Dorsolateral prefrontal cortex (tissue), 120 donors: ENCODE measurements at regions of chr16 and their contacts with region 1.

Region 1: GRCh38 chr16:9012848-9013507 is 49.3 kb upstream of the USP7 start:
- DNase-seq: peak in 5 of 10 donors; percentile 46 to 73 (median 58)
- H3K4me3 ChIP-seq: no peak overlapping the region
- H3K27ac ChIP-seq: peak overlapping the region in 1 of 59 donors; percentile 15
- H3K27me3 ChIP-seq: peaks cover 0 to 34% (median 0%) of the 10 kb centered on the region in 45 donors
- CTCF ChIP-seq: peak in 8 of 56 donors; percentile 9 to 22 (median 16)

Region 2: GRCh38 chr16:8885674-8886592 is 127.0 kb before region 1 on chr16:
- intact Hi-C with region 1: loop called in 1 of 2 experiments (anchors 10 kb)
- DNase-seq: peak in 1 of 10 donors; percentile 43
- H3K4me3 ChIP-seq: no peak overlapping the region
- H3K27ac ChIP-seq: peak overlapping the region in 6 of 59 donors; percentile 7 to 22 (median 18)
- H3K27me3 ChIP-seq: no peaks in the 10 kb centered on the region
- CTCF ChIP-seq: no peak

Region 3: DNA sequence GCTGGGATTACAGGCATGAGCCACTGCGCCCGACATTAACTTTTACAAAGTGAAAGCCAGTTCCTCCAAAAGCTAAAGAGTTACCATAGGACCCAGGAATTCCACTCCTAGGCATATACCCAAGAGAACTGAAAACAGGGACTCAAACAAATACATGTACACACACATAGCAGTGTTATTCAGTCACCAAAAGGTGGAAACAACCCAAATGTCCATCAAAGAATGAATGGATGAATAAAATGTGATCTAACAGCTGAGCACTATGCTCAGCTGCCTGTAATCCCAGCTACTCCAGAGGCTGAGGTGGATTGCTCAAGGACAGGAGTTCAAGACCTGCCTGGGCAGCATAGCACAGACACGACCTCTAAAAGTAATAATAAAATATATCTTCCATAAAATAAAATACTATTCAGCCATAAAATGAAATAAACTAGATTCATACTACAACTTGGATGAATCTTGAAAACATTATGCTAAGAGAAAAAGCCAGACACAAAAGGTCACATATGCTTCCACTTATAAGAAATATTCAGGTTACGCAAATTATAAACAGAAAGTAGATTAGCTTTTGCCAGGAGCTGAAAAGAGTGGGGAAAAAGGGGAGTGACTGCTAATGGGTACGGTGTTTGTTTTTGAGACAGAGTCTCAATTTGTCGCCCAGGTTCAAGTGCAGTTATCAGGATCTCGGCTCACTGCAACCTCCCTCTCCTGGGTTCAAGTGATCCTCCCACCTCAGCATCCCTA is 40.0 kb before region 1 on chr16:
- intact Hi-C with region 1: no loop called
- DNase-seq: no peak
- H3K4me3 ChIP-seq: no peak overlapping the region
- H3K27ac ChIP-seq: no peak overlapping the region
- H3K27me3 ChIP-seq: no peaks in the 10 kb centered on the region
- CTCF ChIP-seq: no peak